Dorsolateral prefrontal cortex (tissue), 120 donors: ENCODE measurements at regions of chr15 and their contacts with region 1.

Region 1: DNA sequence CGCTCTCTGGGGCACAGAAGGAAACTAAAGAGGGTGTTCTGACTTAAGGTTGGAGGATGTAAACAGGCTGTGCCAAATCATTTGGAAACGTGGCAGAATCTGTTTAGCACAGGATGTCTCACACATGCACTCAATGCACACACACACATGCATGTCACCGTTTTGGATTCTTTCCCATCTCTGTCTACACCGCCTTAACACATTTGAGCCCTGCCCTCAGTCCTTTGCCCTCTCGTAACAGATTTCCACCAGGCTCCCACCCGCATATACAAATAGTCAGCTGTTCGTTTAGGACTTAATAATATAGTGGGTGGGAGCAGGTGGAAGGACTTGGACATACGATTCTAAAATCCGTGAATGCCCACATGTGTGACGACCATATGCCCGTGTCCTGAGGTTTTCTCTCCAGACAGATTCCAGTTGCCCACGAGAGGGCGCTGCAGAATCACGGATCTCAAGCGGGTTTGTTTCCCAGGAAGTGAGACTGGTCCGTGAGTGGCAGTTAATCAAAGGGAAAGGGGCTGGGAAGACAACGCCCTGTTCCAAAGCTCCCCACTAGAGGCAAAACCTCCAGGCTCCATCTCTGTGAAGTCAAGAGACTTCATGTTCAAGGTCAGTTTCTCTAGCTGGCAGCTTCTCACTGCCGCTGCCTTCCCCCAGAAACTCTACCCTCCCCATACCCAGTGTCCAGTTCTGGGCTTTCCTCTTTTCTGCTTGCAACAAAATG is 44.5 kb downstream of the NOX5 start:
- DNase-seq: peak; percentile 86 to 95 (median 91)
- H3K4me3 ChIP-seq: peak overlapping the region in 38 of 59 donors; percentile 1 to 54 (median 31)
- H3K27ac ChIP-seq: peak overlapping the region in 3 of 59 donors; percentile 18 to 36 (median 26)
- H3K27me3 ChIP-seq: peaks cover 0 to 10% (median 0%) of the 10 kb centered on the region in 45 donors
- CTCF ChIP-seq: peak; percentile 82 to 99 (median 95)

Region 2: GRCh38 chr15:68783226-68784058 is 275.6 kb before region 1 on chr15:
- intact Hi-C with region 1: no loop called
- DNase-seq: no peak
- H3K4me3 ChIP-seq: no peak overlapping the region
- H3K27ac ChIP-seq: peak overlapping the region in 49 of 59 donors; percentile 9 to 84 (median 73)
- H3K27me3 ChIP-seq: no peaks in the 10 kb centered on the region
- CTCF ChIP-seq: peak in 54 of 56 donors; percentile 19 to 72 (median 55)

Region 3: GRCh38 chr15:69160141-69160993 is 101.4 kb after region 1 on chr15 and contains the start of gene GLCE:
- intact Hi-C with region 1: loop called in 1 of 2 experiments (anchors 5 kb)
- DNase-seq: peak; percentile 93 to 99 (median 97)
- H3K4me3 ChIP-seq: peak within 1 kb of the TSS; percentile 57 to 96 (median 85)
- H3K27ac ChIP-seq: peak within 1 kb of the TSS in 58 of 59 donors; percentile 55 to 98 (median 93)
- H3K27me3 ChIP-seq: no peaks in the 10 kb centered on the region
- CTCF ChIP-seq: peak in 27 of 56 donors; percentile 8 to 51 (median 28)
- total RNA-seq, gene GLCE: 10.7 to 33.2 (median 23.6) TPM

Region 4: GRCh38 chr15:69225355-69226025 is 166.5 kb after region 1 on chr15:
- intact Hi-C with region 1: loop called (anchors 1 to 10 kb)
- DNase-seq: no peak
- H3K4me3 ChIP-seq: no peak overlapping the region
- H3K27ac ChIP-seq: no peak overlapping the region
- H3K27me3 ChIP-seq: no peaks in the 10 kb centered on the region
- CTCF ChIP-seq: peak in 55 of 56 donors; percentile 19 to 77 (median 47)

Region 5: DNA sequence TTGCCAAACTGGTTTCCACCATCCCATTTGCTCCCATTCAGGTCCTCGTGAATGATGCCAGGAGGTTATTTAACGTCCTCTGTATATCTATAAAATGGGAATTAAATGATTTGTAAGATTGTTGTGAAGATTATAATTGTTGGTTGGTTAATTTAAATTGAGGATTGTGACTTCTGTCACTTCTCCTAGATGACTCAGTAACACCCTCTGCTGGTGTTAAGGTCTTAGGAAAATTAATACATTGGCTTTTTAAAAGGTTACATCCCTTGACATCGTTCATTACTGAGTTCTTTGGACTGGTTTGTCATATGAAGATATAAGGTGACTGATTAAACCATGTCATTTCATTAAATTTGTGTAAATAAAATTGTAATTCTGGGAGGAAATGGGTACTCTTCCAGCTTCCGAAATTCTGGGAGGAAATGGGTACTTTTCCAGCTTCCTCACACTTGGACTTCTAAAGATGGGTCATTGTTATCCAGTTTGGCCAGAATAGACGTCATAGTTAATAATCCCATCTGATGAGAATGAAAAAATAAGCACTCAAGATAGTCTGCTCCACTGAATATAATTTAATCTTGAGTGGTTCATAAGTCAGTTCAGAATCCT is 206.5 kb after region 1 on chr15:
- intact Hi-C with region 1: loop called (anchors 2 to 10 kb)
- DNase-seq: no peak
- H3K4me3 ChIP-seq: no peak overlapping the region
- H3K27ac ChIP-seq: no peak overlapping the region
- H3K27me3 ChIP-seq: no peaks in the 10 kb centered on the region
- CTCF ChIP-seq: peak in 55 of 56 donors; percentile 33 to 80 (median 66)

Region 6: DNA sequence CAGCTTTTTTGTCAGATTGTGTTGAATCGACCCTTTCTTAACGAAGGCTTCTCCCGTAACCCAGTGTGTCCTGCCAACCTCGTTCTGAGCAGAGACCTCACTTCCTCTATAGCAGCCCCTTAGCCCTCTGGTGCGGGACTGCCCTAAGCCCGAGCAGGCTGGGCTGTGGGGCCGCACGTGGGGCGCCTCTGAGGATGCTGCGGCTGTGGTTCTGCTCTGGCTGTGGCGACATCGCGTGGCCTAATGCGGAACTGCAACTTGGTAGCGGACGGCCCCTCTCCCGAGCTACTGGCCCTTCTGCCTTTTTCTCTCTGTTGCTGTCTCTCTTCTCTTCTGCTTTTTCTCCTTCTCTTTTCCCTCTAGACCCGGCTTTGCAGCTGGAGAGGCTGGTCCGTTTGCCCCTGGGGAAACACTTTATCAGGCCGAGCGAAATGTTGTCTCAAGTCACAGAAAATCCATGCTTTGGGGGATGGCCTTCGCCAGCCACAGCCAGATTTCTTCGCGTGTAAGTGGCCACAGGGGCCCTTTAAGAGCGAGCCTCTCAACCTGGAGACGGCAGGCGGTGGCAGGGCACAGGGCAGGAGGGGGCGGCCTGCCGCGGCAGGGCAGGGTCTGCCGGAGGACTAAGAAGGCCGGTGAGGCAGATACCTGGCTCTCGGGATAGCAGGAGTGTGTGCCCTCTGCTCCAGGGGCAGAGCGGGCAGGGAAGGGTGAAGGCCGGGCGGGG is 335.7 kb after region 1 on chr15:
- intact Hi-C with region 1: loop called (anchors 1 kb)
- DNase-seq: peak; percentile 77 to 91 (median 84)
- H3K4me3 ChIP-seq: peak overlapping the region in 49 of 59 donors; percentile 3 to 58 (median 34)
- H3K27ac ChIP-seq: peak overlapping the region in 2 of 59 donors; percentile 18 to 45
- H3K27me3 ChIP-seq: no peaks in the 10 kb centered on the region
- CTCF ChIP-seq: peak; percentile 89 to 99 (median 98)